ENCODE measurements at regions of chr9 and their contacts with region 1.

Region 1: DNA sequence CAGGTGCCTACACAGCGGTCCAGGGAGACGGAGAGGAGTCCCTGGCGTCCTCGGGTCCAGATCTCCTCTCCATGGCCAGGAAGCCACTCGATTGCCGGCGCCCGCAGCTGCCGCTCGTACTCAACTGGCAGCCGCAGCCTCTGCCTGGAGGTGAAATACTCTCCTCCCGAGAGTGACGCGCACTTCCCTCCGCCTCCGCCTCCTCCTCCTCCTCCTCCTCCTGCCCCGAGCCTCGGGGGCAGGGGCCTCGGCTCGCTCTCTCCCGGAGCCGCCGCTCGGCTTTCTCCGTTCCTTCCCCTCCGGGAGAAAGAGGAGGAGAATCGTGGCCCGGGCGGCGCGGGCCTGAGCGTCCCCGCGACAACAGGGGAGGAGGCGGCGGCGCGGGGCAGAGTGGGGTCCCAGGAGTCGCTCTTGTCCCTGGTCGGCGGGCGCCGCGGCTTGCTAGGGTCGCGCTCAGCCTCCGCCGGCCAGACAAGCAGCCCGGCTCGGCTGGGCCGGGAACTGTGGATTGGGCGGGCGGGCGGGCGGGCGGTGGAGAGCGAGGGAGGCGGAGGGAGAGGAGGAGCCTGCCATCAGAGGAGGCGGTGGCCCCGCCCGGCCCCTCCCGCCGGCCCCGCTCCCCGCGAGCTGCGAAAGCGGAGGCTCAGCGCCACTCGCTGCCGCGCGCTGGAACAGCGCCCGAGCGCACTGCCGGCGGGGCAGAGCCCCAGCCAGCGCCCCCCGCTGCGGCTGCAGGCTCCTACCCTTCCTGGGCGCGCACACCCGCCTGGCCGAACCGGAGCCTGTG is at the start of gene CEMIP2:
- DNase-seq: peak; percentile 86 to 93 (median 89)
- ATAC-seq: peak; percentile 91
- H3K4me3 ChIP-seq: peak within 1 kb of the TSS; percentile 91
- H3K4me3 Mint-ChIP-seq: peak within 1 kb of the TSS; percentile 93 to 99 (median 96)
- H3K27ac ChIP-seq: peak within 1 kb of the TSS; percentile 95
- H3K27ac Mint-ChIP-seq: peak within 1 kb of the TSS; percentile 93 to 98 (median 97)
- H3K4me1 ChIP-seq: peaks cover 18 to 33% of the 10 kb centered on the region in 2 donors
- H3K4me1 Mint-ChIP-seq: peaks cover 28 to 45% (median 39%) of the 10 kb centered on the region in 7 donors
- H3K27me3 ChIP-seq: no peaks in the 10 kb centered on the region
- H3K27me3 Mint-ChIP-seq: no peaks in the 10 kb centered on the region
- total RNA-seq, gene CEMIP2: 69.5 to 183 (median 103) TPM

Region 2: DNA sequence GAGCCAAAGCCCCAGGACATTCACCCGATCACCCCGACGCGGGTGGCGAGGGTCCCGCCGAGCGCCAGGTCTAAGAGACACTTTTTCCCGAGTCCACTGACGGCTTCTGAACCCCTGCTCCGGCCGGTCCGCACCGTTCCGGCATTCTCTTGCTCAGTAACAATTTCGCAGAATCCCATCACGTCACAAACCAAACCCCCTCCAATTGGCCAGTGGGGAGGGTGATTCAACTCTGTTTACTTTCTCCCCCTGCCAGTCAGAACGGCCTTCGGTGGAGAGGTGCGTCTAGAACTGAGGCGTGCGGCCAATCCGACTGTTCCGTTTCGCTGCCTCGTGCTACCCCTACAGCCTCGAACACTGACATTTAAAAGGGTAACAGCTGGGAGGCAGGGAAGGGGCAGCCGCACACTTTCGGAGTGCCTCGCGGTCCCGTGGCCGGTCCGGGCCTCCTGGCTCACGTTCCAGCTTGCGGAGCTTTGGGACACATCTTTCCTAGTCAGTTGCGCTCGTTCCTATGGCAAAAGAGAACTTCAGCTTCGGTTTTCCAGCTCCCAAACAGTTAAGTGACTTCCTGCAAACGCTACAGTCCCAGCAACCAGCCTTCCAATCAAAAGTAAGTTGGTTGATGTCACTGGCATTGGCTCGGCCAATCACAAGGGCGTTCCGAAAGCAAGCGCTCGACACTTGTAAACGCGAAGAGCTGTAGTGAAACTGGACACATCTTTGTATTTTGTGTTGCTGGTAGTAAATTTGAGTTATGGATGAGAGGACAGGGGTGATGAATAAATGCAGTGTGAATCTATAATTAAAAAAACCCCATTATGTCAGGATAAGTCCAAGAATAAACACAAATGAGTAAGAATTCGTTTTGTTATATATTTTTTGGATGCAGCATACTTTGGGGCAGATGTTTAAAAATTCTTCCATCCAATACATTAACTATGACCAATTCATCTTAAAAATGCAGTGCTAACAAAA is 1354.5 kb before region 1 on chr9 and contains the start of gene KLF9:
- CTCF ChIA-PET with region 1: no interaction called
- POLR2A ChIA-PET with region 1: interaction called, 3 read pairs
- intact Hi-C with region 1: loop called (anchors 5 kb)
- DNase-seq: peak; percentile 76 to 97 (median 96)
- ATAC-seq: peak; percentile 89
- H3K4me3 ChIP-seq: peak within 1 kb of the TSS; percentile 42
- H3K4me3 Mint-ChIP-seq: peak within 1 kb of the TSS; percentile 91 to 100 (median 96)
- H3K27ac ChIP-seq: peak within 1 kb of the TSS; percentile 99
- H3K27ac Mint-ChIP-seq: peak within 1 kb of the TSS; percentile 99 to 100 (median 100)
- H3K4me1 ChIP-seq: peaks cover 37 to 39% of the 10 kb centered on the region in 2 donors
- H3K4me1 Mint-ChIP-seq: peaks cover 12 to 63% (median 45%) of the 10 kb centered on the region in 7 donors
- H3K27me3 ChIP-seq: no peaks in the 10 kb centered on the region
- H3K27me3 Mint-ChIP-seq: peaks cover 0 to 3% (median 0%) of the 10 kb centered on the region in 5 donors
- total RNA-seq, gene KLF9: 12.6 to 96.7 (median 23.3) TPM

Region 3: GRCh38 chr9:71604197-71605063 is 164.2 kb before region 1 on chr9:
- CTCF ChIA-PET with region 1: interaction called, 14 read pairs
- POLR2A ChIA-PET with region 1: no interaction called
- intact Hi-C with region 1: loop called (anchors 1 kb)
- DNase-seq: peak; percentile 52 to 80 (median 75)
- ATAC-seq: peak; percentile 89
- H3K4me3 ChIP-seq: no peak overlapping the region
- H3K4me3 Mint-ChIP-seq: no peak overlapping the region
- H3K27ac ChIP-seq: no peak overlapping the region
- H3K27ac Mint-ChIP-seq: no peak overlapping the region
- H3K4me1 ChIP-seq: no peaks in the 10 kb centered on the region
- H3K4me1 Mint-ChIP-seq: peaks cover 0 to 4% (median 0%) of the 10 kb centered on the region in 7 donors
- H3K27me3 ChIP-seq: peaks cover 0 to 3% of the 10 kb centered on the region in 2 donors
- H3K27me3 Mint-ChIP-seq: peaks cover 0 to 29% (median 0%) of the 10 kb centered on the region in 5 donors

Region 4: GRCh38 chr9:71716138-71716909 is 52.3 kb before region 1 on chr9:
- CTCF ChIA-PET with region 1: no interaction called
- POLR2A ChIA-PET with region 1: interaction called, 7 read pairs
- intact Hi-C with region 1: loop called (anchors 2 to 10 kb)
- DNase-seq: peak in 1 of 9 donors; percentile 10
- ATAC-seq: no peak
- H3K4me3 ChIP-seq: no peak overlapping the region
- H3K4me3 Mint-ChIP-seq: no peak overlapping the region
- H3K27ac ChIP-seq: no peak overlapping the region
- H3K27ac Mint-ChIP-seq: no peak overlapping the region
- H3K4me1 ChIP-seq: no peaks in the 10 kb centered on the region
- H3K4me1 Mint-ChIP-seq: peaks cover 9 to 19% (median 16%) of the 10 kb centered on the region in 7 donors
- H3K27me3 ChIP-seq: no peaks in the 10 kb centered on the region
- H3K27me3 Mint-ChIP-seq: no peaks in the 10 kb centered on the region

Region 5: DNA sequence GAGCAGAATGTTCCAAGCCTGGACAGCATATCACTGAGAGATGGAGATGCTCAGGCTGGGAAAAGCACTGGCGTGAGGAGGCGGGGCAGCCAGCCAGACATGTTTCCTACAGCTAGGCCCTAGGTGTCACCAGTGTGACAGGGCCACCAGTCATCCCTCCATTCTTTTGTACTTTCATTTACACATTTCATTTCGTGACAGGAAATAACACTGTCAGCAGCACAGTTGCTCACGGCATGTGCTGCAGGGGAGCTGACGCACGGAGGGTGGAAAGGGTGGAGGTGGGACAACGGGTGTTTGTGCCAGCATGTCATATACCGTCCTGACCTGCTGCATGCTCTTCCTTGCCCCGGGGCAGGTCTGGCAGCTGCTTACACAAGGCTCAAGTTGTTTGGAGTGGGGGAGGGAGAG is 14.5 kb after region 1 on chr9:
- CTCF ChIA-PET with region 1: interaction called, 16 read pairs
- POLR2A ChIA-PET with region 1: interaction called, 88 read pairs
- intact Hi-C with region 1: loop called (anchors 1 kb)
- DNase-seq: peak; percentile 60 to 93 (median 90)
- ATAC-seq: peak; percentile 98
- H3K4me3 ChIP-seq: peak overlapping the region; percentile 18
- H3K4me3 Mint-ChIP-seq: peak overlapping the region; percentile 62 to 82 (median 76)
- H3K27ac ChIP-seq: peak overlapping the region; percentile 85
- H3K27ac Mint-ChIP-seq: peak overlapping the region; percentile 94 to 100 (median 99)
- H3K4me1 ChIP-seq: peaks cover 38% of the 10 kb centered on the region in 2 donors
- H3K4me1 Mint-ChIP-seq: peaks cover 20 to 58% (median 53%) of the 10 kb centered on the region in 7 donors
- H3K27me3 ChIP-seq: no peaks in the 10 kb centered on the region
- H3K27me3 Mint-ChIP-seq: no peaks in the 10 kb centered on the region

Region 6: DNA sequence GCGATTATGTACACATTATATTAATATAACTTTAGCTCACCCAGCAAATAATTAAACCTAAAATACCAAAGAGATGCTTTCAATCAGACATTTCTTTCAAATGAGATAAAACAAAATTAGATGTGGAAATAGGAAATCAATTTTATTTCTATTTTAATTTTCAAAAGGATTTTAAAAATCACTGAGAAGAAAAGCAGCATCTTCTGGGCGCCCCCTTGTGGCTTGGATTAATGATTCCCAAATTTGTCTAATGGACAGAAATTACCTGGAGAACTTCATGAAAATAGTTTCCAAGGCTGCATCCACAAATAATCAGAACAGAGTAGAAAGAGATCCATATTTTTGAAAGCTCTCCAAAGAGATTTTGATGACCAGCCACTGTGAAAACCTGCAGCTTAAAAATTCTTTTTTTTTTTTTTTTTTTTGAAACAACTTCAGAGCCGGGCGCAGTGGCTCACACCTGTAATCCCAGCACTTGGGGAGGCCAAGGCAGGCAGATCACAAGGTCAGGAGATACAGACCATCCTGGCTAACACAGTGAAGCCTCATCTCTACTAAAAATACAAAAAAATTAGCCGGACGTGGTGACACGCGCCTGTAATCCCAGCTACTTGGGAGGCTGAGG is 50.6 kb after region 1 on chr9:
- CTCF ChIA-PET with region 1: interaction called, 12 read pairs
- POLR2A ChIA-PET with region 1: interaction called, 8 read pairs
- intact Hi-C with region 1: loop called (anchors 1 kb)
- DNase-seq: peak in 7 of 9 donors; percentile 26 to 61 (median 55)
- ATAC-seq: no peak
- H3K4me3 ChIP-seq: no peak overlapping the region
- H3K4me3 Mint-ChIP-seq: no peak overlapping the region
- H3K27ac ChIP-seq: no peak overlapping the region
- H3K27ac Mint-ChIP-seq: peak overlapping the region in 3 of 9 donors; percentile 12 to 60 (median 51)
- H3K4me1 ChIP-seq: peaks cover 7 to 8% of the 10 kb centered on the region in 2 donors
- H3K4me1 Mint-ChIP-seq: peaks cover 11 to 35% (median 26%) of the 10 kb centered on the region in 7 donors
- H3K27me3 ChIP-seq: no peaks in the 10 kb centered on the region
- H3K27me3 Mint-ChIP-seq: no peaks in the 10 kb centered on the region

Region 7: DNA sequence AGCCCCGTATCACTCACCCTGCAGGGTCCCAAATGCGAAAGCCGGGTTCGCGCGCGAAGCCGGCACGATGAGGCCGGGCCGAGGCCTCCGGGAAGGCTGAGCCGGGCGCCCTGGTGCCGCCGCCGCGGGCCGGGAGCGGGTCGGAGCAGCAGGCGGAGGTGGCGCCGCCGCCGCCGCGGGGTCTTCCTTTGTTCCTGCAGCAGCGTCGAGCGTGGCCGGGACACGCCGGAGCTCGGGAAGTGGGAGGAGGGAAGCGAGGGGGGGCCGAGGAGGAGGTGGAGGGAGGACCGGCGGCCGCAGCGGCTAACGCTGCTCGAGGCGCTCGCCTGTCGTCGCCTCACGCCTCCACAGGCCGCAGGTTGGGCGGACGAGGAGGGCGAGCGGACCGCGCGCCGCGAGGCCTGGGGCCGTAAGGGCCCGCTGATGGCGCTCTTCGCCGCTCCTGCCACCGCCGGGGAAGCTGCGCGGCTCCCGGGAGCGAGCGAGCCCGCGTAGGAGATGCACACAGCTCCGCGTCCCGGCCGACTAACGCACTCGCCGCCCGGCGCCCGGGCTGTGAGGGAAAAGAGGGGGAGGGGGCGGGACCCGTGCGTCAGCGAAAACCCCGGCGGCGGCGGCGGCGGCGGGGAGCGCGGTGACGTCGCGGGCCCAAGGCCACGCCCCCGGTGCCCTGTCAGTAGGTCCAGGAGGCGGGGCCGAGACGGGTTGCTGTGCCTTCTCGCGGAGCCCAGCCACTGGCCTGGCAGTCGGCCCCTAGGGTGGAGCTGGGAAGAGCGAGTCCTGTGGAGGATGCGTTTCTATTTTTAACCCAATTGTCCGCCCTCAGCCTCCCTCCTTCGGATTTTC is 596.3 kb after region 1 on chr9 and contains the start of gene ZFAND5:
- CTCF ChIA-PET with region 1: no interaction called
- POLR2A ChIA-PET with region 1: interaction called, 8 read pairs
- intact Hi-C with region 1: loop called (anchors 1 to 2 kb)
- DNase-seq: peak; percentile 88 to 93 (median 90)
- ATAC-seq: peak; percentile 90
- H3K4me3 ChIP-seq: peak within 1 kb of the TSS; percentile 89
- H3K4me3 Mint-ChIP-seq: peak within 1 kb of the TSS; percentile 91 to 99 (median 96)
- H3K27ac ChIP-seq: peak within 1 kb of the TSS; percentile 94
- H3K27ac Mint-ChIP-seq: peak within 1 kb of the TSS; percentile 97 to 99 (median 99)
- H3K4me1 ChIP-seq: peaks cover 24 to 30% of the 10 kb centered on the region in 2 donors
- H3K4me1 Mint-ChIP-seq: peaks cover 16 to 47% (median 44%) of the 10 kb centered on the region in 7 donors
- H3K27me3 ChIP-seq: no peaks in the 10 kb centered on the region
- H3K27me3 Mint-ChIP-seq: no peaks in the 10 kb centered on the region
- total RNA-seq, gene ZFAND5: 82.4 to 466 (median 155) TPM